PC-9 (cell line): ENCODE measurements at regions of chr7 and their contacts with region 1.

Region 1: GRCh38 chr7:149239345-149240191 is at the start of gene ZNF212:
- DNase-seq: peak; percentile 89 to 97
- H3K4me3 ChIP-seq: peak within 1 kb of the TSS; percentile 95
- H3K27ac ChIP-seq: peak within 1 kb of the TSS; percentile 82
- H3K4me1 ChIP-seq: peaks cover 45% of the 10 kb centered on the region
- H3K27me3 ChIP-seq: no peaks in the 10 kb centered on the region
- CTCF ChIP-seq: peak; percentile 79
- total RNA-seq, gene ZNF212: 16.9 and 22.3 TPM in 2 replicates

Region 2: DNA sequence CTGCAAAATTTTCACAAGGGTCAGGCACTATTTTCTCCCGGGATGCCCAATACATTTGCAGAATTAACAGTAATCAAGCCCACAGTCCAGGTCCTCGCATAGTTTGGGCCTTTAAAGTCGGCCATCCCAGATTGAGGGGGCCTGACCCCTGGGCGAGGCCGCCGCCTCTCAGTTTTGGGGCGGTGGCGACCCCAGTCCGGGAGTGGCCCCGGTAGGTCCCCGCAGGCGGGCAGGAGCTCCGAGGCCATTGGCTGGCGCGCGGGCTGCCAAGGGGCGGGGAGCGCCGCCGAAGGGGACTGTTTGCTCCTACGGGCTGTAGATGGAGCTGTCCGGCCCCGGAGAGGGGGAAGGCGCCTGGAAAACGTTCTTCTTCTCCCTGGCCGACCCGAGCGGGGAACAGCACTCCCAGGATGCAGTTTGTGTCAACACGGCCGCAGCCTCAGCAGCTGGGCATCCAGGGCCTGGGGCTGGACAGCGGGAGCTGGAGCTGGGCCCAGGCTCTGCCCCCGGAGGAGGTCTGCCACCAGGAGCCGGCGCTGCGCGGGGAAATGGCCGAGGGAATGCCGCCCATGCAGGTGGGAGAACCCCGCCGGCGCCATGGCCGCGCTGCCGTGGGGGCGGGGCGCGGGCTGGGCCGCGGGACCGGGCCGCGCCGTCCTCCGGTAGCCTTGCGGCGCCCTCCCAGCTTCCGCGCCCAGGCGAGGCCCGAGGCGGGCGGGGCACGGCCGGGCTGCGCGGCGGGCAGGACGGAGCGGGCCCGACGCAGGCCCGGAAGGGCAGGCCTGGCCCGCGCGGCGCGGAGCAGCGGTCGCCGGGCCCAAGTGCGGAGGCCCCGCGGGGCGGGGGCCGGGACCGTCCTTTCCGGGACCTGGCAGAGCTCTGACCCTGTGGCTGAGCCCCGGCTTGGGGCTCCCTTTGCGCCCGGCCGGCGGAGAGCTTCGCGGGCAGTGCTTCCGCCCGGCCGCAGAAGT is 44.1 kb before region 1 on chr7 and contains the start of gene ZNF282:
- CTCF ChIA-PET with region 1: no interaction called
- POLR2A ChIA-PET with region 1: no interaction called
- intact Hi-C with region 1: loop called (anchors 1 kb)
- DNase-seq: peak; percentile 90 to 94
- H3K4me3 ChIP-seq: peak within 1 kb of the TSS; percentile 91
- H3K27ac ChIP-seq: peak within 1 kb of the TSS; percentile 75
- H3K4me1 ChIP-seq: peaks cover 17% of the 10 kb centered on the region
- H3K27me3 ChIP-seq: no peaks in the 10 kb centered on the region
- CTCF ChIP-seq: peak; percentile 69
- total RNA-seq, gene ZNF282: 32.5 and 35.9 TPM in 2 replicates

Region 3: DNA sequence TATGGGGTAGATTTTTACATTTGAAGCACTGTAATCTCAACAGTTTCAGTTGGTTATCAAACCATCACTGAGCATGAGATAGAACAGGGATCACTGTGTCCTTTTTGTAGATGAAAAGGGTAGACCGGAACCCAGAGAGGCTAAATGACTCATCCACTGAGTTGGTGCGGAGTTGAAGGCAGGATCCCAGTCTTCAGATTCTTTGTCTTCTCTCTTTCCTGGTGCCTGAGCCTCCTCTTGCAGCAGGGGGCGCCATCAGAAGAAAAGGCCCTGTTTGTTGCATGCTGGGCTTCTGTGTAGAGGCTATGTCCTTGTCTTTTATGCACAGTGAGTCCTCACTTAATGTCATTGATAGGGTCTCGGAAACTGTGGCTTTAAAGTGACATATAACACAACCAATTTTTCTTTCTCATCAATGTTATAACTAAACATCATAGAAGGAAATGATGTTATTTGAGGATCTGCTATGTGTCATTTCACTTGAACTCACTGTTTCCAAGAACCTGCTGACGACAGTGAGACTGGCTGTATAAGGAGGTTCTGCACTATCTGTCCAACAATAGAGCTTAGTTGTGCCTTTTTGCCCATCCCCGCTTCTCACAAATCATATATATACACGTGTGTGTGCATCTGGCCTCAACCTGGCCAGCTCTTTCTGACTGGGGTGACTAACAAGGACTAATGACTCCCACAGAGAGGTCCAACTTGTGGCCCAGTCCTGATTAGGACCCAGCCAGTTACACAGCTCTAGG is 29.9 kb before region 1 on chr7:
- CTCF ChIA-PET with region 1: no interaction called
- POLR2A ChIA-PET with region 1: no interaction called
- intact Hi-C with region 1: loop called (anchors 1 kb)
- DNase-seq: peak in 1 of 2 experiments; percentile 66
- H3K4me3 ChIP-seq: no peak overlapping the region
- H3K27ac ChIP-seq: no peak overlapping the region
- H3K4me1 ChIP-seq: peaks cover 21% of the 10 kb centered on the region
- H3K27me3 ChIP-seq: no peaks in the 10 kb centered on the region
- CTCF ChIP-seq: peak; percentile 87

Region 4: GRCh38 chr7:149261829-149262617 is 22.5 kb after region 1 on chr7 and contains the start of gene ZNF783:
- CTCF ChIA-PET with region 1: interaction called, 5 read pairs
- POLR2A ChIA-PET with region 1: no interaction called
- intact Hi-C with region 1: loop called (anchors 2 kb)
- DNase-seq: peak; percentile 74 to 90
- H3K4me3 ChIP-seq: peak within 1 kb of the TSS; percentile 89
- H3K27ac ChIP-seq: peak within 1 kb of the TSS; percentile 74
- H3K4me1 ChIP-seq: peaks cover 16% of the 10 kb centered on the region; the same call in 1 of the 2 replicates
- H3K27me3 ChIP-seq: no peaks in the 10 kb centered on the region
- CTCF ChIP-seq: peak; percentile 68
- total RNA-seq, gene ZNF783: 15.8 and 22.2 TPM in 2 replicates

Region 5: GRCh38 chr7:149317986-149318672 is 78.6 kb after region 1 on chr7:
- CTCF ChIA-PET with region 1: interaction called, 11 read pairs
- POLR2A ChIA-PET with region 1: no interaction called
- intact Hi-C with region 1: no loop called
- DNase-seq: no peak
- H3K4me3 ChIP-seq: no peak overlapping the region
- H3K27ac ChIP-seq: no peak overlapping the region
- H3K4me1 ChIP-seq: no peaks in the 10 kb centered on the region
- H3K27me3 ChIP-seq: no peaks in the 10 kb centered on the region
- CTCF ChIP-seq: no peak; the same call in 1 of the 2 replicates

Region 6: GRCh38 chr7:149369508-149369907 is 129.9 kb after region 1 on chr7:
- CTCF ChIA-PET with region 1: no interaction called
- POLR2A ChIA-PET with region 1: no interaction called
- intact Hi-C with region 1: no loop called
- DNase-seq: peak; percentile 65 to 98
- H3K4me3 ChIP-seq: peak overlapping the region; percentile 31; the same call in 1 of the 2 replicates
- H3K27ac ChIP-seq: peak overlapping the region; percentile 41
- H3K4me1 ChIP-seq: peaks cover 41% of the 10 kb centered on the region
- H3K27me3 ChIP-seq: no peaks in the 10 kb centered on the region
- CTCF ChIP-seq: no peak